HAP-1 (cell line): ENCODE measurements at regions of chr11 and their contacts with region 1.

Region 1: DNA sequence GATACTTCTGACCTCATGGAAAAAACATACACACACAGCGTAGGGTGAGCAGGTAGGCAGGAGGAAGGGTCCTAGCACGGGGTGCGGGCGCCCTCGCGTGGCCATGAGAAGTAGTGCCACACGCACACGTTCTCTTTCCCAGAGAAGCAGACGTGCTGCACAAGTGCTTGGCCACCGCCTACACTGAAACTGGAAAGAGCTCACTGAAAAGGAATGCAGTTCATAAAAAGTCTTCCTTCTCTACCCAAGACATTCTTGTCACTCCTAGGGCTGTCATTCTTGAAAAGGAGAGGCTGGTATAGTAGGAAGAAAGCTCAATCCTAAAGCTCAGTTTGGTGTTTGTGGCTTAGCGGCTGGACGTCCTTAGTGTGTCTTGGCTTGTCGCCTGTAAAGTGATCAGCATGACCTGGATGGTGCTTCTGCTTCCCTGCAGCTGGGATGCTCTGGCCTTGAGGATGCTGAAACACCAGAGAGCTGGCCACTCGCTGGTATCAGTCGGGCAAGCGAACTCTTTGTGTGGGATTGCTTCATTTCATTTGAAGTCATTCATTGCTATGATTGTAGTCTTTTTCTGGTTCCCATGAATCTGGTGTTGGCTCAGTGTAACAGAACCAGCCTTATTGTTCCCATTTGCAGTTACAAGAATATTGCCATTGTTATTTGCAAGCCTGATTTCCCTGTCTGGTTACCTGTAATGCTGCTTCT is 303.8 kb downstream of the NTM start:
- DNase-seq: peak; percentile 40 to 70
- H3K4me3 ChIP-seq: no peak overlapping the region
- H3K4me1 ChIP-seq: no peaks in the 10 kb centered on the region
- H3K27me3 ChIP-seq: no peaks in the 10 kb centered on the region

Region 2: DNA sequence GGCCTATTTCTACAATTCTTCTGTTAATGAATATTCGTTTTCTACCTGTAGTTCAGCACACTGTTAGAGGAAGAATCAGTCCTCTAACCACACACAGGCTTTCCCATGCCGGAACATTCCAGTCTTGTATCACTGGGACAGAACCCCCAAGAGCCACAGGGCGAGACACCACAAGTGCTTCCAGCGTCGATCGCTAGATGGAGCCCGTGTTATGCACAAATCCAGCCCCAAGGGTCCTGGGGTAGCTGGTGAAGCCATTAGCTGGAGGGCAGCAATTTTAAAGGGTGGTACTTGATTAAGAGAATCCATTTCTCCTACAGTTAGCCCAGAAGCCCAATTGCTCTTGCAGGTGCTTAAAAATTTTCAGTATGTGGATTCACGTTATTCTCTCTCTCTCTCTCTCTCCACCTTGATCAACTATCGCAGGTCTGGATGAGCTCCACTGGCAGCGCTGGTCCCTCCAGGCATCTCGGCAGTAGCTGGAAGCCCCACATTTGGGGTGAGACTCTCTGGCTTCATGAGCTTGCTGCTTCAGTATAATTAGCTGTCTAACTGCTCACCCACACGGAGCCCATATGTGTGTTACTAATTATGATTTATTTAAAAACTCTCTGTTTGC is 609.7 kb before region 1 on chr11:
- in situ Hi-C with region 1: loop called (anchors 10 kb)
- DNase-seq: peak; percentile 24 to 76
- H3K4me3 ChIP-seq: no peak overlapping the region
- H3K4me1 ChIP-seq: no peaks in the 10 kb centered on the region
- H3K27me3 ChIP-seq: no peaks in the 10 kb centered on the region

Region 3: DNA sequence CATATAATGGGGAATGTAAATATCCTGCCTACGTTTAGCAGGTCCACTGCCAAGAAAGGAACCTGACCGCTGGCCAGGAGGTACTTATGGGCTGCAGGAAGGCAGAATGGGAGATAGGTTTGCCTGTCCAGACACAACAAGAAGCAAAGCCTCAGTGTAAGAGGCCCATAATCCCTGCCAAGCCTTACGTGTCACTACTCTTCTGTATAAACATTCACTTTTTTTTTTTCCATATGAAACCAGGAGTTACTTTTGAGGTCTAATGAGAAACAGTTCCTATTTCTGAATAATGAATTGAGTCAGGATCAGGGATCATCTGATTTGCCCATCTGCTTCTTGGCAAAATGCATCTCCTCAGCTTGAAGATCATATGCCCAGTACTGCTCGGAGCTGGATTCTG is 73.6 kb before region 1 on chr11:
- in situ Hi-C with region 1: no loop called
- DNase-seq: no peak
- H3K4me3 ChIP-seq: no peak overlapping the region
- H3K4me1 ChIP-seq: no peaks in the 10 kb centered on the region
- H3K27me3 ChIP-seq: no peaks in the 10 kb centered on the region